Mammary epithelial cell (primary cell): ENCODE measurements at regions of chr14 and their contacts with region 1.

Region 1: DNA sequence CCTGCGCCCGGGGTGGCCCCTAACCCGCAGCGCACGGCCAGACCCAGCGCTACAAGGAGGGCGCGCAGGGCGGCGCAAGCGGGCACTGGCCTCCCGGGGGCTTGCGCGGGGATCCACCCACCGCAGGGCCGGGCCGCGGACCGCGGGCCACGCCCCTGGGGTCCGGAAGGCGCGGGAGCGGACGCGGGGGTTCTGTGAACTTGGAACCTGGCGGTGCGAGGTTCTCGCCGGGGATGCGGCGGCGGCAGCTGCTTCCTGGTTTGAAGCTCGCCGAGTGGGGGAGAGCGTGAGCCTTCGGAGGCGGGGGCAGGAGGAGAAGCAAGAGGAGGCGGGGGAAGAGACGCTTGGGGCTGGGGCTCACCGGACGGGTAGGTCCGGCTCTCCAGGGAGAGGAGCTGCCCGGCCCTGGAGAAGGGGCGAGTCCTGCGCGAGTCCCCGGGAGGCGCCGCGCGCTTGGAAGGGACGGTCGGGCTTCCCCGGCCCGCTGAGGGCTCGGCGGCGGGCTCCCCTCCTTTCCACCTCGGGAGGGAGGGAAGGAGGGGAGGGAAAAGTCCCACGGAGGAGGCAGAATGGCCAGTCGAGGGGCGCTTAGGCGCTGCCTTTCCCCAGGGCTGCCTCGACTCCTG is at the start of gene PRKCH:
- DNase-seq: peak; percentile 76
- H3K4me3 ChIP-seq: peak within 1 kb of the TSS; percentile 84 to 90 (median 84)
- H3K27ac ChIP-seq: peak within 1 kb of the TSS; percentile 97
- H3K4me1 ChIP-seq: peaks cover 15% of the 10 kb centered on the region
- H3K27me3 ChIP-seq: no peaks in the 10 kb centered on the region
- CTCF ChIP-seq: peak in 1 of 2 donors; percentile 38
- total RNA-seq, gene PRKCH: 8.8 to 16.2 TPM

Region 2: DNA sequence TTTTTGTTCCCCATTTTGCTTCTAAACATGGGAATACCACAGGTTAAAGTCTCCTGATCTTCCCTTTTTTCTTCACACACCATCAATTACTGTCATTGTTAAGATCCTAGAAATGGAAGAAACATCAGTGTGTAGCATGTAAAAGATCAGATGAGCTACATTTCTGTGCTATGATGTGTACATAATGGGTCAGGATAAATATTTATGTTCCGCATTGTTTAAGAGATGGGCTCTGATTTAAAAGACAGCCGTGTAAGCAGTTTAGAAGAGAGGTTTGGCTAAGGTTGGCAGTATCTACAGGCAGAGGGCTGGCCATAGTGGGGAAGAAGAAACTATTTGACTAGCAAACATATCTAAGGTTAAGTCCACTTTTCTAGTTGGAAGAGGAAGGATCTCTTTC is 1352.2 kb before region 1 on chr14:
- CTCF ChIA-PET with region 1: no interaction called
- dilution Hi-C with region 1: no loop called
- in situ Hi-C with region 1: no loop called
- intact Hi-C with region 1: no loop called
- DNase-seq: no peak
- H3K4me3 ChIP-seq: no peak overlapping the region
- H3K27ac ChIP-seq: no peak overlapping the region
- H3K4me1 ChIP-seq: no peaks in the 10 kb centered on the region
- H3K27me3 ChIP-seq: peaks cover 4% of the 10 kb centered on the region
- CTCF ChIP-seq: no peak

Region 3: GRCh38 chr14:61252369-61253063 is 69.0 kb before region 1 on chr14:
- CTCF ChIA-PET with region 1: no interaction called
- dilution Hi-C with region 1: no loop called
- in situ Hi-C with region 1: no loop called
- intact Hi-C with region 1: no loop called
- DNase-seq: peak; percentile 89
- H3K4me3 ChIP-seq: no peak overlapping the region
- H3K27ac ChIP-seq: no peak overlapping the region
- H3K4me1 ChIP-seq: peaks cover 6% of the 10 kb centered on the region
- H3K27me3 ChIP-seq: no peaks in the 10 kb centered on the region
- CTCF ChIP-seq: peak; percentile 93 to 95

Region 4: DNA sequence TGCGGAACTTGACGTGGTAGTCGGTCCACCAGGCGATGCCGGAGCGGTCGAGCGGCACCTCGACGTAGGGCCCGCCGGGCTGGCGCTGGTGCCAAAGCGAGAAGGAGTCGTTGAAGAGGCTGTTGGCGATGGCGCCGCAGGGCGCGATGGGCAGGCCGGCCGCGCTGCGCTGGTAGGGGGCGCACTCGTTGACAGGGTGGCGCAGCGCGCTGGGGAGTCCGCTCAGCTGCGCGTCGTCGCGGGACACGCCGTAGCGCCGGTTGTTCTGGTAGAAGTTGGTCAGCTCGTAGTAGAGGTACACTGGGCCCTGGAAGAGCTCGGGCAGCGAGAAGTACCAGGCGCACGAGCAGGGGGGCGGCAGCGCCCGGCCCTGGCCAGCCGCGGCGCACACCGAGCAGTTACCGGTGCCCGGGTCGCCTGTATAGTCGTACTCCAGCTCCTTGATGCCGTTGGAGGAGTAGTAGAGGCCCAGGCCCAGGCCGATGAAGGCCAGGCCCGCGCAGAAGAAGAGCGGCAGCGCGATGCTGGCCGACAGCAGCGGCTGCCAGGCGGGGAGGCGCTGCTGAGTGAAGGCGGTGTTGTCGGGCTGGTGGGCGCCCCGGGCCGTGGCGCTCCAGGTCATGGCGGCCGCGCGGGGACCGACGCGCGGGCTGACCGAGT is 40.8 kb before region 1 on chr14:
- CTCF ChIA-PET with region 1: no interaction called
- dilution Hi-C with region 1: no loop called
- in situ Hi-C with region 1: no loop called
- intact Hi-C with region 1: loop called (anchors 5 kb)
- DNase-seq: peak; percentile 18
- H3K4me3 ChIP-seq: peak overlapping the region; percentile 59 to 83 (median 69)
- H3K27ac ChIP-seq: peak overlapping the region; percentile 96
- H3K4me1 ChIP-seq: peaks cover 22% of the 10 kb centered on the region
- H3K27me3 ChIP-seq: no peaks in the 10 kb centered on the region
- CTCF ChIP-seq: peak; percentile 26 to 63

Region 5: DNA sequence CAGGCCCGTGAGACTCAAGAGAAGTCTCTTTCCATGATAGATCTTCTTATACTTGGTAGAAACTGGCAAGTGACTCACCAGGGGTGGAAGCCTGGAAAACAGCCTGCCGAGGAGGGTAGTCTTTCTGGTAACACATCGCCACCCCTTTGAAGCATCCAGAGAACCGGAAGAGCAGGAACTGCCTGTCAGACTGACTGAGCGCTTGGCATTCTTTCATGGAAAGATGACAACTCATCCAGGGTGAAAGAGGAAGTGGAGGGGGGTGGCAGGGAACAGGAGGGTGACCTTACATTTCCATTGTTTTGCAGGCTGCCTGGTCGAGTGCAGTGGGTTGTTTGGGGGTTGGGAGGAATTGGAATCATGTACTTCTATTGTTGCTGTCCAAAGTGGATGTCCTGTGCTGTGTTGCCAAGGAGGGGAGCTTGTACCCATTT is 34.4 kb after region 1 on chr14:
- CTCF ChIA-PET with region 1: no interaction called
- dilution Hi-C with region 1: no loop called
- in situ Hi-C with region 1: no loop called
- intact Hi-C with region 1: loop called (anchors 2 kb)
- DNase-seq: peak; percentile 94
- H3K4me3 ChIP-seq: peak overlapping the region in 1 of 3 experiments; percentile 19
- H3K27ac ChIP-seq: peak overlapping the region; percentile 82
- H3K4me1 ChIP-seq: peaks cover 13% of the 10 kb centered on the region
- H3K27me3 ChIP-seq: no peaks in the 10 kb centered on the region
- CTCF ChIP-seq: no peak

Region 6: DNA sequence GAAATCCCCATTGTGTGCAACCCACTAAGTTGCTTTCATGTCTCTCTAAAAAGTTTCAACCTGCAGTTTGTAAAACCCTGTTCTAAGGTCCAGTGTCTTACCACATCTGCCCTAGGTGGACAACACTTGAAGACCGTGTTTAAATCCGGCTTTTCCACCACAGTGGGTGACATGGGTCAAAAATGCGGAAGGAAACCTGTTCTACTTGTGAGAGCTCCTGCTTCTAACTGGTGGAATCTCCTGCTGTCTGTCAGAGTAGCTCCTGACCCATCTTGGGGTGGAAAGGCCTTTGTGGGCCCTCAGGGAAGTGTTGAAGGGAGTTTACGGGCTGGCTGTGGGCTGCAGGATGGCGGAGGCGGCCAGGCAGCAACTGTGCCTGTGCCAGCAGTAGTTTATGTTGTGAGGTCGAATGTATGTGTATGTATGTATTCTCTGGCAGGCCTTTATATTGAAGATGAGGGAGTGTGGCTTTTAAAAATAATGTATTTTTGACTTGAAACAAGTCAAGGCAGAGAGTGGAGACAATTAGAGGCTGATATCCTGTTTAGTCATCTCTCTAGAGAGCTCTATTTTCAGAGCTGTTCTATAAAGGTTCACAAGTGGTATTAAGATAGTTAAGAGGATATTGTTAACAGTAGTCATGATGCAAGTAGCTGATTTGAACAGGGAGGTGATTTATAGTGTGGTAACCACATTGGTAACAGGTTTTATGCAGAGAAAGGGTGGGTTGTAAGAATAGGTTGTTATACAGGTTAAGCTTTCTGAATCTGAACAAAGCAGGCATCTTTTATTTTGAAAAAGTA is 66.9 kb after region 1 on chr14:
- CTCF ChIA-PET with region 1: no interaction called
- dilution Hi-C with region 1: no loop called
- in situ Hi-C with region 1: no loop called
- intact Hi-C with region 1: loop called (anchors 2 kb)
- DNase-seq: peak; percentile 94
- H3K4me3 ChIP-seq: no peak overlapping the region
- H3K27ac ChIP-seq: peak overlapping the region; percentile 94
- H3K4me1 ChIP-seq: peaks cover 25% of the 10 kb centered on the region
- H3K27me3 ChIP-seq: no peaks in the 10 kb centered on the region
- CTCF ChIP-seq: no peak

Region 7: GRCh38 chr14:61438860-61439684 is 117.6 kb after region 1 on chr14:
- CTCF ChIA-PET with region 1: no interaction called
- dilution Hi-C with region 1: no loop called
- in situ Hi-C with region 1: no loop called
- intact Hi-C with region 1: loop called (anchors 5 kb)
- DNase-seq: peak; percentile 43
- H3K4me3 ChIP-seq: no peak overlapping the region
- H3K27ac ChIP-seq: no peak overlapping the region
- H3K4me1 ChIP-seq: peaks cover 7% of the 10 kb centered on the region
- H3K27me3 ChIP-seq: no peaks in the 10 kb centered on the region
- CTCF ChIP-seq: no peak

Region 8: GRCh38 chr14:61456720-61457119 is 135.2 kb after region 1 on chr14:
- CTCF ChIA-PET with region 1: no interaction called
- dilution Hi-C with region 1: no loop called
- in situ Hi-C with region 1: loop called in 1 of 2 experiments (anchors 10 kb)
- intact Hi-C with region 1: loop called (anchors 1 kb)
- DNase-seq: peak; percentile 49
- H3K4me3 ChIP-seq: no peak overlapping the region
- H3K27ac ChIP-seq: no peak overlapping the region
- H3K4me1 ChIP-seq: peaks cover 10% of the 10 kb centered on the region
- H3K27me3 ChIP-seq: no peaks in the 10 kb centered on the region
- CTCF ChIP-seq: peak; percentile 81 to 85

Region 9: GRCh38 chr14:62002642-62003041 is 681.1 kb after region 1 on chr14:
- CTCF ChIA-PET with region 1: no interaction called
- dilution Hi-C with region 1: no loop called
- in situ Hi-C with region 1: no loop called
- intact Hi-C with region 1: no loop called
- DNase-seq: peak; percentile 86
- H3K4me3 ChIP-seq: no peak overlapping the region
- H3K27ac ChIP-seq: no peak overlapping the region
- H3K4me1 ChIP-seq: peaks cover 16% of the 10 kb centered on the region
- H3K27me3 ChIP-seq: no peaks in the 10 kb centered on the region
- CTCF ChIP-seq: no peak